ENCODE measurements at regions of chr6 and their contacts with region 1.

Region 1: DNA sequence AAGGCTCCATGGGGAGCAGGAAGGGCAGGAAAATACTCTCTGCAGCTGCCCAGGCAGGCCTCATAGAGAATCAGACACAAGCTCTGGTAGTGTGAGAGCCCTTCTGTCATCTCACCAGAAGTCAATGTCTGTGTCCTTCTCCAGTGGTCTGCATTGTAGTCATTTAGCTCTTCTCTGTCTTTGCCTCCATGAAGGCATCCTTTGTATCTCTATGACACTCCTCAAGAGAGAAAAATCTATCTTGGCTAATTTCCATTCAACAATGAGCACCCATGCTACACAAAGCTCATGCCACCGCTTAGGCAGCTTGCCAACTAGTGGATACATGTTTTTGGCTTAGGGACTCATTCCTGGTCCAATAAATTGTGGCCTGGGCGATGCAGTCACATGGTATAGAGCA is 92.1 kb downstream of the RNF217 start:
- DNase-seq: no peak
- H3K4me3 ChIP-seq: no peak overlapping the region
- CTCF ChIP-seq: no peak
- POLR2A ChIP-seq: no peak

Region 2: DNA sequence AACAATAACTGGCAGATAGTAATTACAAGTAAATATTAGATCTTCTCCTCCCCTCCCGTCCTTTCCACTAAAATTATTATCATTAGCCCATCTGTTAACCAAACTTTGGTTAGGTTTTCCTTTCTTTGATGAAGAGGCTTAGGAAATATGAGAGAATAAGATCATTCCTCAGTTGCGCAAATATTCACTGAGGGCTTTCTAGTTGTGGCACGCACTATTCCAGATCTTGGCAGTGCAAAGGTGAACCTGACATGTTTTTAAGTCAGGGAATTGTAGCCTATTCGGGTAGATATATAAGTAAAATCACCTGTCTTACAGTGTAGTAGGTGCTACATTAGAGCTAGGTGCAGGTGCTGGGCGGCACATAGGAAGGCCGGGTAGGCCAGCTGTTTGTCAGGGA is 61.0 kb before region 1 on chr6:
- intact Hi-C with region 1: loop called (anchors 2 kb)
- DNase-seq: no peak
- H3K4me3 ChIP-seq: no peak overlapping the region
- CTCF ChIP-seq: no peak
- POLR2A ChIP-seq: no peak